ENCODE measurements at regions of chr9 and their contacts with region 1.

Region 1: DNA sequence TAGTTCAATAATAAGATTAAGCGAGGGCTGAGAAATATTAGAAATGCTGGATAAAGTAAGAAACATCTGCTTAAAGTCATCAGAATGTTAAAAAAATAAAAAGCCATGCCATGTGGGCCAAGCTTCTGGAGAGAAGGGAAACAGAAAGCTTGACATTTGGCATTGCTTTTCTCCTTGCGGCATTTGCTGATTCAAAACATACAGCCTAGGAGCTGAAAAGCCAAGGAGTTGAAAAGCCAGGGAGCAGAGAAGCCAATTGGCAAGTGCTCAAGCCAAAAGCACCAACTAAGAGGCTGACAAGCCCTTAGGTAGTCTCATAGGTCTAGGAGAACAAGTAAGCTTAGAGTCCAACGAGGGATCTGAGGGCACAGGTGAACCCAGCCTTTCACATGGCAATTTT is 754.3 kb downstream of the TLE4 start:
- DNase-seq: no peak
- H3K4me3 ChIP-seq: no peak overlapping the region
- H3K27ac ChIP-seq: no peak overlapping the region
- H3K4me1 ChIP-seq: no peaks in the 10 kb centered on the region
- H3K27me3 ChIP-seq: no peaks in the 10 kb centered on the region
- CTCF ChIP-seq: no peak
- POLR2A ChIP-seq: no peak

Region 2: GRCh38 chr9:79111653-79112052 is 1214.5 kb before region 1 on chr9:
- intact Hi-C with region 1: loop called (anchors 5 kb)
- DNase-seq: no peak
- H3K4me3 ChIP-seq: no peak overlapping the region
- H3K27ac ChIP-seq: no peak overlapping the region
- H3K4me1 ChIP-seq: no peaks in the 10 kb centered on the region
- H3K27me3 ChIP-seq: no peaks in the 10 kb centered on the region
- CTCF ChIP-seq: no peak
- POLR2A ChIP-seq: no peak

Measured in breast epithelium (tissue), 4 donors.